CD4-positive, alpha-beta memory T cell (primary cell): ENCODE measurements at regions of chr1 and their contacts with region 1.

Region 1: GRCh38 chr1:21200767-21201166 is 24.1 kb upstream of the EIF4G3 start:
- DNase-seq: no peak
- H3K4me3 ChIP-seq: no peak overlapping the region
- H3K4me3 Mint-ChIP-seq: no peak overlapping the region
- H3K27ac ChIP-seq: no peak overlapping the region
- H3K27ac Mint-ChIP-seq: no peak overlapping the region
- H3K4me1 ChIP-seq: no peaks in the 10 kb centered on the region
- H3K4me1 Mint-ChIP-seq: no peaks in the 10 kb centered on the region
- H3K27me3 ChIP-seq: no peaks in the 10 kb centered on the region
- H3K27me3 Mint-ChIP-seq: peaks cover 2 to 8% of the 10 kb centered on the region in 2 donors

Region 2: GRCh38 chr1:20696397-20697329 is 504.1 kb before region 1 on chr1:
- CTCF ChIA-PET with region 1: interaction called, 168 read pairs
- POLR2A ChIA-PET with region 1: interaction called, 5 read pairs
- intact Hi-C with region 1: no loop called
- DNase-seq: peak; percentile 60 to 71 (median 68)
- H3K4me3 ChIP-seq: peak overlapping the region; percentile 84 to 90
- H3K4me3 Mint-ChIP-seq: peak overlapping the region; percentile 87 to 95 (median 89)
- H3K27ac ChIP-seq: peak overlapping the region; percentile 46
- H3K27ac Mint-ChIP-seq: peak overlapping the region in 6 of 7 donors; percentile 22 to 92 (median 68)
- H3K4me1 ChIP-seq: peaks cover 10% of the 10 kb centered on the region
- H3K4me1 Mint-ChIP-seq: peaks cover 2 to 12% (median 6%) of the 10 kb centered on the region in 4 donors
- H3K27me3 ChIP-seq: no peaks in the 10 kb centered on the region
- H3K27me3 Mint-ChIP-seq: peaks cover 0 to 3% of the 10 kb centered on the region in 2 donors

Region 3: GRCh38 chr1:20732588-20733360 is 468.0 kb before region 1 on chr1 and contains the start of gene SH2D5:
- CTCF ChIA-PET with region 1: interaction called, 4 read pairs
- POLR2A ChIA-PET with region 1: no interaction called
- intact Hi-C with region 1: loop called (anchors 1 kb)
- DNase-seq: peak; percentile 54 to 87 (median 63)
- H3K4me3 ChIP-seq: peak within 1 kb of the TSS; percentile 68 to 69
- H3K4me3 Mint-ChIP-seq: peak within 1 kb of the TSS; percentile 78 to 91 (median 88)
- H3K27ac ChIP-seq: no peak within 1 kb of the TSS
- H3K27ac Mint-ChIP-seq: peak within 1 kb of the TSS in 6 of 7 donors; percentile 54 to 85 (median 77)
- H3K4me1 ChIP-seq: peaks cover 17% of the 10 kb centered on the region
- H3K4me1 Mint-ChIP-seq: peaks cover 10 to 23% (median 13%) of the 10 kb centered on the region in 4 donors
- H3K27me3 ChIP-seq: no peaks in the 10 kb centered on the region
- H3K27me3 Mint-ChIP-seq: peaks cover 3 to 19% of the 10 kb centered on the region in 2 donors
- total RNA-seq, gene SH2D5: 0.38 TPM in 1 of 2 experiments, not detected in the other

Region 4: DNA sequence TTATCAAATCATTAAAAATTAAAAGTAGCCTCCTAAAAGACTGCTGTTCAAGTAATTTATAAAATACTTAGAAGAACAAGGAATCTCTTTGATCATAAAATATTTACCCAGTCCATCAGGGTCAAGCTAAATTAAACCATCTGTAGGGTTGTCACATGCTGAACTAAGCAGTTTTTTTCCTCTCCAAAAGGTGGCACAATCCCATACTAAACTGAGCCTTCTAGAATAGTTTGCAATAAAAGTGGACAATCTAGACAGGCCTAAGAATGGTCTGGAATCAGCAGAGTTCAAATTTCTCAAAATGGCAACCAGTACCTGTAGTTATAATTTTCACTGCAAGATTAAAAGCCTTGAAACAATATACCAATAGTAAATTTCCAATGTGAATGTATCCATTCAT is 218.9 kb before region 1 on chr1:
- CTCF ChIA-PET with region 1: interaction called, 26 read pairs
- POLR2A ChIA-PET with region 1: no interaction called
- intact Hi-C with region 1: loop called (anchors 2 kb)
- DNase-seq: no peak
- H3K4me3 ChIP-seq: no peak overlapping the region
- H3K4me3 Mint-ChIP-seq: no peak overlapping the region
- H3K27ac ChIP-seq: no peak overlapping the region
- H3K27ac Mint-ChIP-seq: no peak overlapping the region
- H3K4me1 ChIP-seq: no peaks in the 10 kb centered on the region
- H3K4me1 Mint-ChIP-seq: peaks cover 0 to 3% (median 0%) of the 10 kb centered on the region in 4 donors
- H3K27me3 ChIP-seq: no peaks in the 10 kb centered on the region
- H3K27me3 Mint-ChIP-seq: no peaks in the 10 kb centered on the region

Region 5: GRCh38 chr1:21162740-21163464 is 37.9 kb before region 1 on chr1:
- CTCF ChIA-PET with region 1: interaction called, 10 read pairs
- POLR2A ChIA-PET with region 1: no interaction called
- intact Hi-C with region 1: no loop called
- DNase-seq: no peak
- H3K4me3 ChIP-seq: no peak overlapping the region
- H3K4me3 Mint-ChIP-seq: no peak overlapping the region
- H3K27ac ChIP-seq: no peak overlapping the region
- H3K27ac Mint-ChIP-seq: peak overlapping the region in 1 of 7 donors; percentile 30
- H3K4me1 ChIP-seq: no peaks in the 10 kb centered on the region
- H3K4me1 Mint-ChIP-seq: peaks cover 4 to 15% (median 6%) of the 10 kb centered on the region in 4 donors
- H3K27me3 ChIP-seq: no peaks in the 10 kb centered on the region
- H3K27me3 Mint-ChIP-seq: no peaks in the 10 kb centered on the region

Region 6: GRCh38 chr1:21176586-21177555 is 23.9 kb before region 1 on chr1 and contains the start of gene EIF4G3:
- CTCF ChIA-PET with region 1: interaction called, 12 read pairs
- POLR2A ChIA-PET with region 1: no interaction called
- intact Hi-C with region 1: no loop called
- DNase-seq: peak; percentile 98 to 100 (median 98)
- H3K4me3 ChIP-seq: peak within 1 kb of the TSS; percentile 57 to 75
- H3K4me3 Mint-ChIP-seq: peak within 1 kb of the TSS; percentile 89 to 95 (median 91)
- H3K27ac ChIP-seq: peak within 1 kb of the TSS; percentile 69
- H3K27ac Mint-ChIP-seq: peak within 1 kb of the TSS; percentile 93 to 96 (median 95)
- H3K4me1 ChIP-seq: peaks cover 18% of the 10 kb centered on the region
- H3K4me1 Mint-ChIP-seq: peaks cover 18 to 26% (median 21%) of the 10 kb centered on the region in 4 donors
- H3K27me3 ChIP-seq: no peaks in the 10 kb centered on the region
- H3K27me3 Mint-ChIP-seq: no peaks in the 10 kb centered on the region
- total RNA-seq, gene EIF4G3: 16.6 to 18.0 TPM

Region 7: DNA sequence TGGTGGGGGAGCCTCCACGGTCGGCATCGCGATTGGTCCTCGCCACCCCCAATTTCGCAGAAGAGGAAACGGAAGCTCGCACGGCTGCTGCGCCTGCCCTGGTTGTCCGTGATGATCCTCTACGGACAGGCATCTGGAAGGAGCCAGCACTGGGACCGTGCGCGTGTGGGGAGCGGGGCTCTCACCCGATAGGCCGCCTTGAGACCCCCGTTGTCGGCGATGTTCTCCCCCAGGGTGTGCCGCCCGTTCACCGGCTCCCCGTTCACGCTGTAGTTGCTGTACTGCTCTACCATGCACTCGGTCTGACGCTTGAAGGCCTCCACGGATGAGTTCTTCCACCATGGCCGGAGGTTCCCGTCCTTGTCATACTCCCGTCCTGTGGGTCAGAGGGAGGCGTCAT is 24.3 kb after region 1 on chr1:
- CTCF ChIA-PET with region 1: no interaction called
- POLR2A ChIA-PET with region 1: no interaction called
- intact Hi-C with region 1: no loop called
- DNase-seq: no peak
- H3K4me3 ChIP-seq: no peak overlapping the region
- H3K4me3 Mint-ChIP-seq: peak overlapping the region in 1 of 8 donors; percentile 38
- H3K27ac ChIP-seq: no peak overlapping the region
- H3K27ac Mint-ChIP-seq: peak overlapping the region in 1 of 7 donors; percentile 68
- H3K4me1 ChIP-seq: no peaks in the 10 kb centered on the region
- H3K4me1 Mint-ChIP-seq: peaks cover 0 to 2% (median 0%) of the 10 kb centered on the region in 4 donors
- H3K27me3 ChIP-seq: no peaks in the 10 kb centered on the region
- H3K27me3 Mint-ChIP-seq: no peaks in the 10 kb centered on the region